ENCODE measurements at regions of chr17 and their contacts with region 1.

Region 1: GRCh38 chr17:78840725-78841611 is at the start of gene USP36:
- DNase-seq: peak; percentile 98 to 100 (median 99)
- ATAC-seq: peak; percentile 91
- H3K4me3 ChIP-seq: peak within 1 kb of the TSS; percentile 80
- H3K4me3 Mint-ChIP-seq: peak within 1 kb of the TSS; percentile 90 to 97 (median 95)
- H3K27ac ChIP-seq: peak within 1 kb of the TSS; percentile 99
- H3K27ac Mint-ChIP-seq: peak within 1 kb of the TSS; percentile 90 to 100 (median 98)
- H3K4me1 ChIP-seq: peaks cover 18 to 31% of the 10 kb centered on the region in 2 donors
- H3K4me1 Mint-ChIP-seq: peaks cover 38 to 60% (median 49%) of the 10 kb centered on the region in 7 donors
- H3K27me3 ChIP-seq: no peaks in the 10 kb centered on the region
- H3K27me3 Mint-ChIP-seq: no peaks in the 10 kb centered on the region
- total RNA-seq, gene USP36: 107 to 414 (median 154) TPM

Region 2: DNA sequence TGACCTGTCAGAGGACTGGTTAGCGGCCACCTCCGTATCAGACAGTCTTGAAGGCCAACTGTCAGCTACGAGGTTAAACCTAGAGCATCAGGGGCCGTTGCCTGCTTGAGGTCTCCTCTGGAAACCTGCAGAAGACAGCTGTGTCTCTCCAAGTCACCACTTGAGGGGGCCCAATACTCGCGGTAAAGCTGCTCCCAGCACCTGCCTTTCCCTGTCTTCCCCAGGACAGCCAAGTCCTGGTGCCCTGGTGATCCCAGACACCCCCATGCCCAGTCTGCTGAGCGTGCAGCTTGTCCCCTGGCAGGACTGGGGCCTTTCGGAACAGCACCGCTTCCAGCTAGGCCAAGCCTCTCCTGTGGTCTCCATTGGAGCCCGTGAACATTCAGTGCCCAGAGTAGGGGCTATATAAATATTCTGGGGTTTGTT is 343.8 kb before region 1 on chr17:
- CTCF ChIA-PET with region 1: interaction called, 6 read pairs
- POLR2A ChIA-PET with region 1: no interaction called
- intact Hi-C with region 1: loop called in 1 of 2 experiments (anchors 5 kb)
- DNase-seq: peak in 8 of 9 donors; percentile 21 to 64 (median 48)
- ATAC-seq: peak; percentile 76
- H3K4me3 ChIP-seq: no peak overlapping the region
- H3K4me3 Mint-ChIP-seq: no peak overlapping the region
- H3K27ac ChIP-seq: no peak overlapping the region
- H3K27ac Mint-ChIP-seq: no peak overlapping the region
- H3K4me1 ChIP-seq: no peaks in the 10 kb centered on the region
- H3K4me1 Mint-ChIP-seq: peaks cover 0 to 2% (median 0%) of the 10 kb centered on the region in 7 donors
- H3K27me3 ChIP-seq: no peaks in the 10 kb centered on the region
- H3K27me3 Mint-ChIP-seq: peaks cover 0 to 4% (median 0%) of the 10 kb centered on the region in 5 donors

Region 3: DNA sequence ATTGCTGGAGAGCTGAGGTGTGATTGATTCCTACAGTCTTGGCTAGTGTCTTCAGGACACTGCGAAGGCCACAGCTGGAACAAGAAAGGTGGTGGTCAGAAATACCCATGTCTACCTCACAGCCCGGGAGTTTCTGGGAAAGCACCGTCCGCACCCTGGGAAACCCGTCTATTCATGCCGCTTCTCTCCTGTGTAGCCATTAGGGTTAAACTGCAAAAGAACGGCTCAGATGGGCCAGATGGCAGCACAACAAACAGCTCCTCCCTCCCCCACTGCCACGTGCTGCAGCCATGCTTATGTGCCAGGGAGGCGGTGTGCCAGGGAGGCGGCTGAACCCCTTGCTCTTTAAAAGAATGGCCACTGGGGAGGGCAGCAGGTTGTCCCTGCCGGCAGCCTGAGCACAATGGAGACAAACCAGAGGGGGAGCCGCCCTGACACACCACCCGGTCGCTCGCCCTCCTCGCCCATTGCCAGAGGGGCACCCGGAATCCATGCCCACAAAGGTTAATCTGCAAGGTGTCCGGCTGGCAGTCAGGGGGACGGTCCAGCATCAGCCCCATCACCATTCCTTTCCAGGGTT is 124.1 kb before region 1 on chr17:
- CTCF ChIA-PET with region 1: interaction called, 4 read pairs
- POLR2A ChIA-PET with region 1: no interaction called
- intact Hi-C with region 1: loop called in 1 of 2 experiments (anchors 5 kb)
- DNase-seq: peak in 6 of 9 donors; percentile 31 to 60 (median 42)
- ATAC-seq: peak; percentile 55
- H3K4me3 ChIP-seq: peak overlapping the region; percentile 5
- H3K4me3 Mint-ChIP-seq: peak overlapping the region; percentile 53 to 88 (median 78)
- H3K27ac ChIP-seq: peak overlapping the region; percentile 68
- H3K27ac Mint-ChIP-seq: peak overlapping the region in 8 of 9 donors; percentile 77 to 92 (median 88)
- H3K4me1 ChIP-seq: peaks cover 81 to 84% of the 10 kb centered on the region in 2 donors
- H3K4me1 Mint-ChIP-seq: peaks cover 71 to 98% (median 91%) of the 10 kb centered on the region in 7 donors
- H3K27me3 ChIP-seq: no peaks in the 10 kb centered on the region
- H3K27me3 Mint-ChIP-seq: no peaks in the 10 kb centered on the region

Region 4: GRCh38 chr17:78745407-78746088 is 95.4 kb before region 1 on chr17:
- CTCF ChIA-PET with region 1: interaction called, 3 read pairs
- POLR2A ChIA-PET with region 1: interaction called, 3 read pairs
- intact Hi-C with region 1: loop called (anchors 1 kb)
- DNase-seq: peak in 7 of 9 donors; percentile 48 to 67 (median 56)
- ATAC-seq: peak; percentile 13
- H3K4me3 ChIP-seq: peak overlapping the region; percentile 6
- H3K4me3 Mint-ChIP-seq: peak overlapping the region; percentile 53 to 93 (median 86)
- H3K27ac ChIP-seq: peak overlapping the region; percentile 81
- H3K27ac Mint-ChIP-seq: peak overlapping the region; percentile 62 to 98 (median 95)
- H3K4me1 ChIP-seq: peaks cover 92 to 94% of the 10 kb centered on the region in 2 donors
- H3K4me1 Mint-ChIP-seq: peaks cover 77 to 100% (median 93%) of the 10 kb centered on the region in 7 donors
- H3K27me3 ChIP-seq: no peaks in the 10 kb centered on the region
- H3K27me3 Mint-ChIP-seq: no peaks in the 10 kb centered on the region

Region 5: DNA sequence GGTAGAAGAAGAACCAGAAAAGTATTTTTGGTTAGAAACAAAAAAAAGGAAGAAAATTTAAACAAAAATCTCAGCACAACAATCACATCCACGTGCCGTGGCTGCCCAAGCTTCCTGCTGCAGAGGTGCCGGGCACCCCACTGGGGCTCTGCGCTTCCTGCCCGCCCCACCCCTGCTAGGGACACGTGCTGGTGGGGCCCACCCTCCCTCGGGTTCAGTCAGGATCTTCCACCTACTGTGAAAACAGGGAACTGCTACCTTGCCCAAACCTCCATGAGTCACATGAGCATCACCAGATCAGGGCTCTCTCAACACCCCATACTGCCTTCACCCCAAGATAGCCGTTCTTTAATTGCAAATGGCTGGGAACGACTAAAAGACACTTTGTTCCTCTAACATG is 34.5 kb before region 1 on chr17:
- CTCF ChIA-PET with region 1: no interaction called
- POLR2A ChIA-PET with region 1: interaction called, 5 read pairs
- intact Hi-C with region 1: loop called (anchors 5 kb)
- DNase-seq: peak in 6 of 9 donors; percentile 49 to 80 (median 74)
- ATAC-seq: peak; percentile 80
- H3K4me3 ChIP-seq: no peak overlapping the region
- H3K4me3 Mint-ChIP-seq: peak overlapping the region in 9 of 10 donors; percentile 2 to 76 (median 58)
- H3K27ac ChIP-seq: peak overlapping the region; percentile 41
- H3K27ac Mint-ChIP-seq: peak overlapping the region; percentile 81 to 97 (median 85)
- H3K4me1 ChIP-seq: peaks cover 26 to 43% of the 10 kb centered on the region in 2 donors
- H3K4me1 Mint-ChIP-seq: peaks cover 21 to 52% (median 43%) of the 10 kb centered on the region in 7 donors
- H3K27me3 ChIP-seq: no peaks in the 10 kb centered on the region
- H3K27me3 Mint-ChIP-seq: no peaks in the 10 kb centered on the region

Region 6: GRCh38 chr17:78925234-78925633 is 84.3 kb after region 1 on chr17 and contains the start of gene TIMP2:
- CTCF ChIA-PET with region 1: no interaction called
- POLR2A ChIA-PET with region 1: interaction called, 3 read pairs
- intact Hi-C with region 1: loop called in 1 of 2 experiments (anchors 1 kb)
- DNase-seq: peak; percentile 54 to 78 (median 74)
- ATAC-seq: peak; percentile 89
- H3K4me3 ChIP-seq: peak within 1 kb of the TSS; percentile 49
- H3K4me3 Mint-ChIP-seq: peak within 1 kb of the TSS; percentile 62 to 88 (median 80)
- H3K27ac ChIP-seq: peak within 1 kb of the TSS; percentile 32
- H3K27ac Mint-ChIP-seq: peak within 1 kb of the TSS in 1 of 9 donors; percentile 3
- H3K4me1 ChIP-seq: peaks cover 0 to 7% of the 10 kb centered on the region in 2 donors
- H3K4me1 Mint-ChIP-seq: peaks cover 7 to 19% (median 12%) of the 10 kb centered on the region in 7 donors
- H3K27me3 ChIP-seq: no peaks in the 10 kb centered on the region
- H3K27me3 Mint-ChIP-seq: peaks cover 0 to 48% (median 0%) of the 10 kb centered on the region in 5 donors
- total RNA-seq, gene TIMP2: 1.2 to 46.1 (median 5.8) TPM

Measured in naive thymus-derived CD4-positive, alpha-beta T cell (primary cell).